ENCODE measurements at regions of chr11 and their contacts with region 1.

Region 1: DNA sequence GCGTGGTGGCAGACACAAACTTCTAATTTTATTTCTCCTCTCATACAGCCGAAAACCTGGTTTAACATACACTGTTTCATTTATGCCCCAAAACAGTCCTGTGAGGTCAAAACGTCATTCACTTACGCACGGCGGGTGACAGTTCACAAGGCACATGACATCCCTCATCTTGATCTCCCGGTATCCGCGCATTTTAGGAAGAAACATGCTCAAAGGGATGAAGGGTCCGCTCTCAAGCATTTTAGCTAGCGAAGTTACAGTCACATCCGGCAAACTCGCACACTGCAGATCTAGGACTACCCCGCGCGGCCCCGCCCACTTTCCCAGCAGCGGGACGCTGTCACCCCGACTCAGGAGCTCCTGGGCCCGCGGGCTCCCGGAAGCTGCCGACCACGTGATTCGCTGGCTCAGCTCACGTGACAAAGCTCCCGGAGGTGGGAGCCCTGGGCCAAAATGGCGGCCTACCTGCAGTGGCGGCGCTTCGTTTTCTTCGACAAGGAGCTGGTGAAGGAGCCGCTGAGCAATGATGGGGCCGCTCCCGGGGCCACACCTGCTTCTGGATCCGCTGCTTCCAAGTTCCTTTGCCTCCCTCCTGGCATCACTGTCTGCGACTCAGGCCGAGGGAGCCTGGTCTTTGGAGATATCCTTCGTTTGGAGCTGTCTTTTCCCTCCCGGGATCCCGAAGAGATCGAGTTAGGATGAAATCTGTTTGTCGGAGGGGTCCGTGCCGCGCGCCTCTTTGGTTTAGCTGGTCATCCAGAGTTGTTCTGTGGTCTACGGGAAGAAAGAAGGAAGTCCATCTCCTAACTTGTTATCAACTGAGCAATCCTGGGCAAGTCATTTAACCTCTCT is at the start of gene VPS11:
- DNase-seq: peak; percentile 98
- H3K4me3 Mint-ChIP-seq: peak within 1 kb of the TSS; percentile 96
- H3K27ac Mint-ChIP-seq: peak within 1 kb of the TSS; percentile 97
- H3K4me1 Mint-ChIP-seq: peaks cover 31% of the 10 kb centered on the region
- H3K27me3 Mint-ChIP-seq: peaks cover 2% of the 10 kb centered on the region
- total RNA-seq, gene VPS11: 23.5 and 24.0 TPM in 2 replicates

Region 2: GRCh38 chr11:118997627-118998387 is 69.8 kb before region 1 on chr11 and contains the start of gene CENATAC:
- intact Hi-C with region 1: loop called (anchors 1 kb)
- DNase-seq: peak; percentile 96
- H3K4me3 Mint-ChIP-seq: peak within 1 kb of the TSS; percentile 96
- H3K27ac Mint-ChIP-seq: peak within 1 kb of the TSS; percentile 97
- H3K4me1 Mint-ChIP-seq: peaks cover 27% of the 10 kb centered on the region
- H3K27me3 Mint-ChIP-seq: no peaks in the 10 kb centered on the region
- total RNA-seq, gene CENATAC: 50.1 and 53.6 TPM in 2 replicates

Region 3: DNA sequence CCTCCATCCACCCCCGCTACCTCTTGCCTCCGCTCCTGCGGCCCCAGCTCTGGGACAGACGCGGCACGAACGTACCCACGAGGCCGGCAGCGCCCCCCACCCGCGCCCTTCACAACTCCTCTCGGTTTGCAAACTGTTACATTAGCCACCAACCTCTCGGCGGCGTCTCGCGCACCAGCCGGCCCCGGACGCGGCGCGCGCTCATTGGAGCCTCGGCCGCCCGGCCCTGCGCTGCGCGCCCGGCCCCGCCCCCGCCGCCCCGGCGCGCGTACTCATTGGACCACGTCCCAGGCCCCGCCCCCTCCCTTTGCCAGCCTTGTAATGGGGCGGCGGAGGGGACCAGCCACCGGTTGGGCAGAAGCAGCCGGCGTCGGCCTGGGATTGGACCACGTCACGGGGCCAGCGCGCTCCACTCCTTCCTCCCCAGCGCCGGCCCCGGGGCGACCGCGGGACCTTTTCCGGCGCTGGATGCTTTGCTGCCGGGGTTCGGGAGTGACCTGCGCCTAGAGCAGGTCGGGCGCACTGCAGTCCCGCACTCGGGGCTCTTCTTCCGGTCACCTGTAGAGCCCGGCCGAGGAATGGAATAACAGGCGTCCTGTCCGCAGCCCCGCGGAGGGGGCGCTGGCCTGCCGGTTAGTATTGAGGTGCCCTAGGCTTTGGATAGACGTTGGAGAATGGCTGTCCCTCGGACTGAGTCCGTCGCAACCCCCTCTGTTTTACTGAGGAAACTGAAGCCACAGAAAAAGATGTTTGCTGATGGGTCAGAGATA is 10.4 kb before region 1 on chr11 and contains the start of gene HYOU1:
- intact Hi-C with region 1: loop called (anchors 1 kb)
- DNase-seq: peak; percentile 98
- H3K4me3 Mint-ChIP-seq: peak within 1 kb of the TSS; percentile 97
- H3K27ac Mint-ChIP-seq: peak within 1 kb of the TSS; percentile 99
- H3K4me1 Mint-ChIP-seq: peaks cover 48% of the 10 kb centered on the region
- H3K27me3 Mint-ChIP-seq: no peaks in the 10 kb centered on the region
- total RNA-seq, gene HYOU1: 216 and 219 TPM in 2 replicates

Region 4: GRCh38 chr11:119101759-119102423 is 34.3 kb after region 1 on chr11 and contains the start of gene DPAGT1:
- intact Hi-C with region 1: loop called (anchors 1 kb)
- DNase-seq: peak; percentile 82
- H3K4me3 Mint-ChIP-seq: peak within 1 kb of the TSS; percentile 91
- H3K27ac Mint-ChIP-seq: peak within 1 kb of the TSS; percentile 95
- H3K4me1 Mint-ChIP-seq: peaks cover 44% of the 10 kb centered on the region
- H3K27me3 Mint-ChIP-seq: no peaks in the 10 kb centered on the region
- total RNA-seq, gene DPAGT1: 81.8 and 84.4 TPM in 2 replicates

Region 5: GRCh38 chr11:119196833-119197483 is 129.4 kb after region 1 on chr11:
- intact Hi-C with region 1: loop called (anchors 1 kb)
- DNase-seq: peak; percentile 60
- H3K4me3 Mint-ChIP-seq: no peak overlapping the region
- H3K27ac Mint-ChIP-seq: no peak overlapping the region
- H3K4me1 Mint-ChIP-seq: peaks cover 9% of the 10 kb centered on the region
- H3K27me3 Mint-ChIP-seq: peaks cover 3% of the 10 kb centered on the region

Measured in activated T-helper 1 cell treated with anti-CD3 and anti-CD28 coated beads, Interleukin-12 subunit alpha, Interleukin-12 subunit beta, Interleukin-2, Interleukin-4 antibody, amounts not matched to agents 30 ng/mL and 10 ng/mL and 1 ng/mL, durations not matched to agents 14 hours and 24 hours and 36 hours (primary cell).